H1 (cell line): ENCODE measurements at regions of chr13 and their contacts with region 1.

Region 1: DNA sequence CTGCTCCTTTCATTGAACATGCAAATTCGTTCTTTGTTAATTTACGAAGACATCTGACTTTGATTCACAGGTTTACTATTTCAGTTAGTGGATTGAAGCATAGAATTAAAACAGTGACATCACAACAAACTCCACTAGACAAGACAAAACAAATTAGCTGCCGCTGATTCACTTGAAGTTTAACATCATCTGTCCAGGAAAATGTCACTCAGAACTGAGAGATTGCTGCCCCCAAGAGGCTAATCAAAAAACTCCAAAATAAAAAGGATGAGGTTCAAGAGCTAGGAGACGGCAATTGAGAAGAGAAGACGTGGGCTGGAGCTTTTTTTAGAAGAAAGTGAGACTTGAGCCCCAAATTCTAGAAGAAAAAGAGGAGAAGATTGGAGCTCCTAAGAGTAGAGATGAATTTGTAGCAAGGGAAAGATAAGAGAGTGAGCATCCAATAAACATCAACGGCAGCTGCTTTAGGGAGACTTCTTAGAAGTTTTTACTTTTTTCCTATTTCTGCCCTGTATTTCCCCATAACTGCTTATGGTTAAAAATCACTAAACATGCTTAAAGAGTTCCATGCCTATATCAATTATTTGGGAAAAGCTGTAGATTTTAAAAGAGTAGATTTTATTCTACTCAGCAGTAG is 40.8 kb upstream of the TPP2 start:
- DNase-seq: no peak
- H3K4me3 ChIP-seq: no peak overlapping the region
- H3K27ac ChIP-seq: no peak overlapping the region
- H3K4me1 ChIP-seq: no peaks in the 10 kb centered on the region
- H3K27me3 ChIP-seq: no peaks in the 10 kb centered on the region
- CTCF ChIP-seq: peak in 2 of 3 experiments; percentile 45 to 52; a peak in 2 of 4 replicates
- EP300 ChIP-seq: no peak
- POLR2A ChIP-seq: no peak
- RAD21 ChIP-seq: peak; percentile 78 to 85

Region 2: DNA sequence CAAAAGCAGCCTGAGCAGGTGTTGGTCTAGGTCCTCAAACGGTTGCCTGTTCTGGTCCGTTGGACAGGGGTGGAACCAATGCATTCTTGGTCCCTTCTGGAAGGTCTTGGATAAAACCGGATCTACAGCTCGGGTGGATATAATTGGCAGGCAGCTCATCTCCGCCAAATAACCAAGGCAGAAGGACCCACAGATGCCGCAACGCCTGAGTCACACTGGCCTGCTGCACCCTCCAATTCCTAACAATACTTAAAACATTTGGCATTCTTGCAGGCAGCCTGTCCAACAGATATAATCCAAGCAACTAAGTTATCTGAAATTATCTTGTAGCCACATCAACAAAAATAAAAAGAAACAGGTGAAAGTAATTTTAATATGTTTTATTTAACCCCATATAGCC is 95.2 kb before region 1 on chr13:
- CTCF ChIA-PET with region 1: interaction called, 10 read pairs
- POLR2A ChIA-PET with region 1: no interaction called
- DNase-seq: no peak
- H3K4me3 ChIP-seq: no peak overlapping the region
- H3K27ac ChIP-seq: no peak overlapping the region
- H3K4me1 ChIP-seq: no peaks in the 10 kb centered on the region
- H3K27me3 ChIP-seq: no peaks in the 10 kb centered on the region
- CTCF ChIP-seq: no peak
- EP300 ChIP-seq: no peak
- POLR2A ChIP-seq: no peak
- RAD21 ChIP-seq: no peak

Region 3: GRCh38 chr13:102571075-102571474 is 15.0 kb after region 1 on chr13:
- CTCF ChIA-PET with region 1: interaction called, 23 read pairs
- POLR2A ChIA-PET with region 1: no interaction called
- DNase-seq: no peak
- H3K4me3 ChIP-seq: no peak overlapping the region
- H3K27ac ChIP-seq: no peak overlapping the region
- H3K4me1 ChIP-seq: no peaks in the 10 kb centered on the region
- H3K27me3 ChIP-seq: peaks cover 0 to 1% (median 0%) of the 10 kb centered on the region in 4 experiments; a peak in 1 of 7 replicates
- CTCF ChIP-seq: peak in 2 of 3 experiments; percentile 31 to 33; a peak in 2 of 4 replicates
- EP300 ChIP-seq: no peak
- POLR2A ChIP-seq: no peak
- RAD21 ChIP-seq: peak; percentile 60 to 63

Region 4: DNA sequence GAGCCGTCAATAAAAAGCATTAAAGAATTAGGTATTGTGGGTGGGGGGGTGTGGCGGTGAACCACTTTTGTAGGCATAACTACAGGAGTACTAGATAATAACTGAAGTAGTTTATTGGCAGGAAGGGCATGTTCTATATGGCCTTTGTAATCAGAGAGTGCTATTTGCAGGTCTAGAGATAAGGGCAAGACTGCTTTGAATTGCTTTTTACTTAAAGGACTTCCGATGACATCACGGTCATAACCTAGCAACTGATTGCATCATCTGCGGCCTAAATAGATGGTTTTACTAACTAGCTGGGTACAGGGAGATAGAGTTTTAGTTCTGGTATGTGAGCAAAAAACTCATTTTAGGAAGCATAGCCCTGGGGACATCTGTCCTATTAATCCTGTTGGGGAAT is 114.1 kb after region 1 on chr13:
- CTCF ChIA-PET with region 1: no interaction called
- POLR2A ChIA-PET with region 1: no interaction called
- DNase-seq: no peak
- H3K4me3 ChIP-seq: no peak overlapping the region
- H3K27ac ChIP-seq: no peak overlapping the region
- H3K4me1 ChIP-seq: no peaks in the 10 kb centered on the region
- H3K27me3 ChIP-seq: no peaks in the 10 kb centered on the region
- CTCF ChIP-seq: no peak
- EP300 ChIP-seq: no peak
- POLR2A ChIP-seq: no peak
- RAD21 ChIP-seq: no peak

Region 5: DNA sequence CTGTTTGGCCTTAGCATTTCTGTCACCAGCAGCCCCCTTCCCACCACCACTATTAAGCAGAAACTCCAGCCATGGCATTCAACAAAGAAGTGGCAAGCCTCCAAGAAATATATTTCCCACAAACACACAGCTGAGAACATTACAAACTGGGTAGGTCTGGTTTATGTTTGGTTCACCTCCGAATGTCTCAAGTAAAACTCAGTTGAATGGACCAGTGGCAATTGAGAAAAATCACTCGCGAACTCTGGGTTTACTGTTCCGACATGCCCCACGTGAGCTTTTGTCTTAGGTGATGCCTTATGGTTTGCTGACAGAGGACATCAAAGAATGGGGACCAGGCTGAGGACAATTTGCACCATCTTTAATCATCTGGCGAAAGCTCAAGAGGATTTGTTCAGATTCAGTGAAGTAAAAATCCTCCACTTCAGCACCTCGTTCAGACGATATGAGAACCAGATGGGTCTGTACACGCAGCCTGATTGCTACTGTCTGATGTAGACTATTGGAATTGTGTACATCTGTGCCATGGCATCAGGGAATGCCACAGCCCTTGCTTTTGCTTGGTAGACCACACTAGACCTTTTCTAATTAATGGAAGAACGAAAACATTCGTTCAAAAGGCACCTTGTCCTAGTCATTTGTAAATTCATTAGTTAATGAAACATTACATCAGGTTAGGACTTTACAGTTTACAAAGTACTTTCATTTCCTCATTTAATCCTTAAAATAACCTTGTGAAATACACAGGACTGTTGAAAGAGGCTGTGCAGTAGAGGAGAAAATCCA is 450.8 kb after region 1 on chr13:
- CTCF ChIA-PET with region 1: no interaction called
- POLR2A ChIA-PET with region 1: no interaction called
- DNase-seq: no peak
- H3K4me3 ChIP-seq: no peak overlapping the region
- H3K27ac ChIP-seq: no peak overlapping the region
- H3K4me1 ChIP-seq: no peaks in the 10 kb centered on the region
- H3K27me3 ChIP-seq: peaks cover 0 to 1% (median 0%) of the 10 kb centered on the region in 4 experiments; a peak in 1 of 7 replicates
- CTCF ChIP-seq: no peak
- EP300 ChIP-seq: no peak
- POLR2A ChIP-seq: no peak
- RAD21 ChIP-seq: no peak